WTC11 (cell line): ENCODE measurements at regions of chr3 and their contacts with region 1.

Region 1: DNA sequence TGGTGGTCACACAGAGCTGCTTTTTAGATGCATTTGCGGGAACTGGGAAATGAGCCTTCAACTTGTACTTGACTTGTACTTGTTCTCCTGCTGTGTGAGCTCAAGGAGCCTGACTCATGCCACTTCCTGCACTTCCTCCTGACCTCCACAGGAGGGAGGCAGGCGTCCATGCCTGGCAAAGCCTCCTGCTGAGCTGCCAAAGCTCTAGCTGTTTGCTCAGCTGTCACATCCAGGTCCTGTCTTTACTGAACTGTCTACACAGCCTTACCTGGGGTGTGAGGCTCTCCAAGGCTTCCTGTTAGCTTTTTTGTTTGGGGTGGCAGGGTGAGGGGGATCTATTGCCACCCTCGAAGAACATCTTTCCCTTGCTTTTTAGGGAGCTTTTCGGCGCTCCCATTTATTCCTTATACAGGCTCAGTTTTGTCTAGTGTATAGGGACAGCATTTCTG is 6.4 kb downstream of the THPO start:
- DNase-seq: peak; percentile 82
- ATAC-seq: peak; percentile 86
- H3K4me3 Mint-ChIP-seq: no peak overlapping the region
- H3K27ac Mint-ChIP-seq: peak overlapping the region; percentile 73; the same call in 1 of the 2 replicates
- H3K4me1 Mint-ChIP-seq: peaks cover 51% of the 10 kb centered on the region
- H3K27me3 Mint-ChIP-seq: peaks cover 4% of the 10 kb centered on the region
- CTCF ChIP-seq: peak; percentile 72

Region 2: DNA sequence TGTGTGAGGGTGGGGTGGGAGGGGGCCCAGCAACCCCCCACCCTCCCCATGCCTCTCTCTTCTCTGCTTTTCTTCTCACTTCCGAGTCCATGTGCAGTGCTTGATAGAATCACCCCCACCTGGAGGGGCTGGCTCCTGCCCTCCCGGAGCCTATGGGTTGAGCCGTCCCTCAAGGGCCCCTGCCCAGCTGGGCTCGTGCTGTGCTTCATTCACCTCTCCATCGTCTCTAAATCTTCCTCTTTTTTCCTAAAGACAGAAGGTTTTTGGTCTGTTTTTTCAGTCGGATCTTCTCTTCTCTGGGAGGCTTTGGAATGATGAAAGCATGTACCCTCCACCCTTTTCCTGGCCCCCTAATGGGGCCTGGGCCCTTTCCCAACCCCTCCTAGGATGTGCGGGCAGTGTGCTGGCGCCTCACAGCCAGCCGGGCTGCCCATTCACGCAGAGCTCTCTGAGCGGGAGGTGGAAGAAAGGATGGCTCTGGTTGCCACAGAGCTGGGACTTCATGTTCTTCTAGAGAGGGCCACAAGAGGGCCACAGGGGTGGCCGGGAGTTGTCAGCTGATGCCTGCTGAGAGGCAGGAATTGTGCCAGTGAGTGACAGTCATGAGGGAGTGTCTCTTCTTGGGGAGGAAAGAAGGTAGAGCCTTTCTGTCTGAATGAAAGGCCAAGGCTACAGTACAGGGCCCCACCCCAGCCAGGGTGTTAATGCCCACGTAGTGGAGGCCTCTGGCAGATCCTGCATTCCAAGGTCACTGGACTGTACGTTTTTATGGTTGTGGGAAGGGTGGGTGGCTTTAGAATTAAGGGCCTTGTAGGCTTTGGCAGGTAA is 26.1 kb before region 1 on chr3:
- CTCF ChIA-PET with region 1: interaction called, 20 read pairs
- POLR2A ChIA-PET with region 1: no interaction called
- DNase-seq: peak; percentile 73
- ATAC-seq: peak; percentile 92
- H3K4me3 Mint-ChIP-seq: no peak overlapping the region; the same call in 1 of the 2 replicates
- H3K27ac Mint-ChIP-seq: peak overlapping the region; percentile 78
- H3K4me1 Mint-ChIP-seq: peaks cover 16% of the 10 kb centered on the region
- H3K27me3 Mint-ChIP-seq: no peaks in the 10 kb centered on the region
- CTCF ChIP-seq: no peak

Region 3: GRCh38 chr3:184417619-184418327 is 46.2 kb after region 1 on chr3:
- CTCF ChIA-PET with region 1: interaction called, 18 read pairs
- POLR2A ChIA-PET with region 1: no interaction called
- DNase-seq: peak; percentile 79
- ATAC-seq: peak; percentile 95
- H3K4me3 Mint-ChIP-seq: no peak overlapping the region
- H3K27ac Mint-ChIP-seq: no peak overlapping the region
- H3K4me1 Mint-ChIP-seq: no peaks in the 10 kb centered on the region; the same call in 1 of the 2 replicates
- H3K27me3 Mint-ChIP-seq: no peaks in the 10 kb centered on the region
- CTCF ChIP-seq: peak; percentile 84

Region 4: DNA sequence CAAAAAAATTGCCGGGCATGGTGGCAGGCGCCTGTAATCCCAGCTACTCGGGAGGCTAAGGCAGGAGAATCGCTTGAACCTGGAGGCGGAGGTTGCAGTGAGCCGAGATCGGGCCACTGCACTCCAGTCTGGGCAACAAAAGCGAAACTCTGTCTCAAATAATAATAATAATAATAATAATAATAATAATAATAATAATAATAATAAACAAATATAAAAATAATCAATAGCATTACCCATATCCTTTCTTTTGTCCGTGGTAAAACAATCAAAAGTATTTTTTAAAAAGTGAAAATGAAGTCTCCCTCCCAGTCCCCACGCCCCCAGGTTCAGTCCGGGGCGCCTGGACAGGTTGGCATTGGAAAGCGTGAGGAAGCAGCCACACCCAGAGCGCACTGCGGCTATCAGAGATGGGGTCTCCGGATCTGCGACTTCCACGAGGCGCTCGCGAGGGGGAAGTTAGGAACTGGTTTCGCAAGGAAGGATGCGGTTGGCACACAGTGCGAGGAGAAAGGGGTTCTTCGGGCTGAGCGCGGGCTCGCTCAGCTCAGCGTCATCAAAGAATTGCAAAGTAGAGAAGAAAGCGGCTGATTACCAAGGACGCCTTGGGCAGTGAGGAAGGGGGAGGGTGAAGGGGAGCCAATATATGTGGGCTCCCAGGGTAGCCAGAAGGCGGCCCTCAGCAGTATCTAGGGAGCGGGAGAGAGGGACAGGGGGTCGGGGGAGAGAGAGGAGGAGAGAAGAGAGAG is 120.4 kb after region 1 on chr3:
- CTCF ChIA-PET with region 1: interaction called, 17 read pairs
- POLR2A ChIA-PET with region 1: no interaction called
- DNase-seq: no peak
- ATAC-seq: peak; percentile 57
- H3K4me3 Mint-ChIP-seq: peak overlapping the region; percentile 73
- H3K27ac Mint-ChIP-seq: no peak overlapping the region
- H3K4me1 Mint-ChIP-seq: peaks cover 3% of the 10 kb centered on the region; the same call in 1 of the 2 replicates
- H3K27me3 Mint-ChIP-seq: peaks cover 64% of the 10 kb centered on the region
- CTCF ChIP-seq: no peak

Region 5: DNA sequence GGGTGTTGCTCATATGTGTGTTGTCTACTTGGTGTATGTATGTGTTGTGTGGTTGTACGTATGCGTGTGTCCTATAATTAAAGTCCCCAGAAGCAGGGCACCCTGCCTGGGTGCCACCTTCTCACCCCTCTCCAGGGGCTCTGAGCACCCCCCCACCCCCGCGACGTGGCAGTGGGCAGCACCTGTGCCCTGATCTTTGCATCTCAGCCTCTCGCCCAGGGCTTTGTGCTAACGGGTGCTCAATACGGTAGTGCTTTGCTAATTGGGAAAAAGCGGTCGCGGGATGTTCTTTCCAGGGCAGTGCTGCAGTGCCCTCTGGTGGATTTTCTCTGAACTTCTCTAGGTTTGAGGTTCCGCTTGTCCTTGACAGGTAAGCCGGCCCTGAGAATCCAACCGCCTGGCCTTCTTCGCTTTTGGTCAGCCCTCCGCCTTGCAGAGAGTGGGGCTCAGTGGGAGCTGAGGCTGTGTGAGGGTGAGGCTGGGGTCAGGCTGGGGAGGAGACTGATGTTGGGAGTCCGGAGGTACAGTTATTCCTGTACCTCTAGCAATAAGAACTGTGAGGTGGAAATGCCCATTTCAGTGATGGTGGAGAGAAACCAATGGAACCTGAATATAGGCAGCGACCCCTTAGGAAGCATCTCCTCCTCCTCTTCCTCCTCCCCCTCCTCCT is 172.4 kb after region 1 on chr3:
- CTCF ChIA-PET with region 1: interaction called, 183 read pairs
- POLR2A ChIA-PET with region 1: interaction called, 4 read pairs
- DNase-seq: peak; percentile 87
- ATAC-seq: peak; percentile 65
- H3K4me3 Mint-ChIP-seq: no peak overlapping the region
- H3K27ac Mint-ChIP-seq: no peak overlapping the region
- H3K4me1 Mint-ChIP-seq: peaks cover 26% of the 10 kb centered on the region
- H3K27me3 Mint-ChIP-seq: peaks cover 6% of the 10 kb centered on the region; the same call in 1 of the 2 replicates
- CTCF ChIP-seq: peak; percentile 86